MCF 10A (cell line): ENCODE measurements at regions of chr4 and their contacts with region 1.

Region 1: DNA sequence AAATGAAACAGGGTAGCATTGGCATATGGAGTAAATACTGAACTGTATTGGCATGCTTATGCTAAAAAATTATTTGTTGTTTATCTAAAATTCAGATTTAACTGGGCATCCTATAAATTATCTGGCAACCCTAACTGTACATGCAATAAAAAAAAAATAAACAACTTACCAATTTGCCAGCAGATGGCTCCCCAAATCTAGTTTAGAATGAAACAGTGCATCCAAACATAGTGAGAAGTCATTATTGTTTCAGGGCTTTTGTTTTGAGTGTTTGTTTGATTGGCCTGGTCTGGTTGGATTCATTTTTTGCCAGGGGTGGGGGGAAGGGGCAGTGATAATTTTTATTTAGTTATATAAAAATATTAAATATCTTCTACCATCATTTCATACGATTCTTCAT is 12.8 kb upstream of the NSUN7 start:
- DNase-seq: peak; percentile 52
- H3K4me3 Mint-ChIP-seq: no peak overlapping the region
- H3K27ac Mint-ChIP-seq: no peak overlapping the region
- H3K4me1 Mint-ChIP-seq: peaks cover 6% of the 10 kb centered on the region
- H3K27me3 Mint-ChIP-seq: no peaks in the 10 kb centered on the region
- CTCF ChIP-seq: peak; percentile 39

Region 2: DNA sequence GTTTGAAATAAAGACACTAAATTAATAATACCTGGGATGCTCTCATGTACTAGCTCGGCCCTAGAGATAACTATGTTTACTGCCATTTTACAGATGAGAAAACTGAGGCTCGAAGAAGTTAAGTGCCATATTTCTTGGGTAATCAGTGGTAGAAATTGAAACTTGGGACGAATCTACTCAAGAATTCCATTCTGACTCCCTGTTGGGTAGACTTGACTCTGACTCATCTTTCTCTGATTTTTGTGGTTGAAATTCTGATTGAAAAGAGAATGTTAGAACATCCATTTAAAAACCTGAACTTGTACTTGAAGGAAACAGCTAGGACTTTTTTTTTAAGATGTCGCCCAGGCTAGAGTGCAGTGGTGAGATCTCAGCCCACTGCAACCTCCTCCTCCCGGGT is 37.3 kb before region 1 on chr4:
- CTCF ChIA-PET with region 1: no interaction called
- POLR2A ChIA-PET with region 1: no interaction called
- intact Hi-C with region 1: no loop called
- DNase-seq: no peak
- H3K4me3 Mint-ChIP-seq: no peak overlapping the region
- H3K27ac Mint-ChIP-seq: no peak overlapping the region
- H3K4me1 Mint-ChIP-seq: no peaks in the 10 kb centered on the region
- H3K27me3 Mint-ChIP-seq: no peaks in the 10 kb centered on the region
- CTCF ChIP-seq: no peak

Region 3: GRCh38 chr4:40916880-40917279 is 180.0 kb after region 1 on chr4:
- CTCF ChIA-PET with region 1: interaction called, 3 read pairs
- POLR2A ChIA-PET with region 1: no interaction called
- intact Hi-C with region 1: loop called (anchors 5 kb)
- DNase-seq: peak; percentile 63
- H3K4me3 Mint-ChIP-seq: no peak overlapping the region
- H3K27ac Mint-ChIP-seq: peak overlapping the region; percentile 59
- H3K4me1 Mint-ChIP-seq: peaks cover 24% of the 10 kb centered on the region
- H3K27me3 Mint-ChIP-seq: no peaks in the 10 kb centered on the region
- CTCF ChIP-seq: peak; percentile 32